AG04449 (cell line): ENCODE measurements at regions of chr16 and their contacts with region 1.

Region 1: GRCh38 chr16:30874821-30875717 is 18.8 kb downstream of the BCL7C start:
- DNase-seq: no peak
- H3K4me3 ChIP-seq: peak overlapping the region; percentile 93
- CTCF ChIP-seq: no peak

Region 2: GRCh38 chr16:30659507-30660423 is 215.3 kb before region 1 on chr16:
- CTCF ChIA-PET with region 1: no interaction called
- POLR2A ChIA-PET with region 1: no interaction called
- DNase-seq: no peak
- H3K4me3 ChIP-seq: peak overlapping the region; percentile 80
- CTCF ChIP-seq: no peak

Region 3: GRCh38 chr16:30710971-30711370 is 164.1 kb before region 1 on chr16:
- CTCF ChIA-PET with region 1: no interaction called
- POLR2A ChIA-PET with region 1: no interaction called
- DNase-seq: no peak
- H3K4me3 ChIP-seq: no peak overlapping the region
- CTCF ChIP-seq: no peak

Region 4: GRCh38 chr16:30797670-30798309 is 77.3 kb before region 1 on chr16:
- CTCF ChIA-PET with region 1: no interaction called
- POLR2A ChIA-PET with region 1: no interaction called
- DNase-seq: no peak
- H3K4me3 ChIP-seq: no peak overlapping the region
- CTCF ChIP-seq: no peak

Region 5: GRCh38 chr16:30853758-30854157 is 21.3 kb before region 1 on chr16:
- CTCF ChIA-PET with region 1: no interaction called
- POLR2A ChIA-PET with region 1: interaction called, 10 read pairs
- DNase-seq: no peak
- H3K4me3 ChIP-seq: no peak overlapping the region
- CTCF ChIP-seq: no peak